ENCODE measurements at regions of chr9 and their contacts with region 1.

Region 1: GRCh38 chr9:113591001-113591898 is 127.7 kb downstream of the RGS3 start:
- DNase-seq: peak; percentile 74 to 98 (median 87)

Region 2: DNA sequence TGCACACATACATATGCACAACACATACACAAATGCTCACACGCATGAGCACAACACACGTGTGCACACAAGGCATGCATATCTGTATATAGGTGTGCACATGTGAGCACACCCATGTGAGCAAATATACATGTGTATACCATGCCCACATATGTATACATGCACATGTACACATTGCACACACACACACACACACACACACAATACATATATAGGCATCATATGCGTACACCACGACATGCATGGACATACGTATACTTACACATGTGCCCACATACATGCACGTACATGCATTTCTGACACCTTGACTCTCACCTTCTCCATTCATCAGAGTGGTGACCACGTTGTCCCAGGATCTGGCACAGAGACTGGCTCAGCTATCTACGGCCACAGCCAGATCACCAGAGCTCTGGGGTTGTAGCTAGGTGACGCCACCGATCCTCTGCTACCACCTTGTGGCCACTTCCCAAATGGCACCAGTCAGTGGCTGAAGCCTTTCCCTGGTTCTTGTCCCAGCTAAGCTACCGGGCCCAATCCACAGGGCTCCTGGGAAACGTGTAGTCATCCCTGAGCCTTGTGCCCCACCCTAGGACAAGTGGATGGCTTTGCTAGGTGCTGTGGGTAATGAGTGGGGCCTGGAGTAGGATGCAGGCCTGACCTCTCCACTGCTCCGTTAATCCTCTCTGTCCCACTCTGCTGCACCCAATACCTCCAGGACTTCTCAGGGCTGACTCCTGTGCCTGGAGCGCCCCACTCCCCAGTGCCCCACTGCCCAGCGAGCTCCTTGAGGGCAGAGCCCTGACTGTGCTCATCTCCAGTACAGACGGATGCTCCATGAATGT is 66.7 kb after region 1 on chr9:
- intact Hi-C with region 1: loop called (anchors 1 kb)
- DNase-seq: peak; percentile 74 to 97 (median 90)

Measured in posterior cingulate gyrus (tissue), 11 donors.